ENCODE measurements at regions of chr13 and their contacts with region 1.

Region 1: DNA sequence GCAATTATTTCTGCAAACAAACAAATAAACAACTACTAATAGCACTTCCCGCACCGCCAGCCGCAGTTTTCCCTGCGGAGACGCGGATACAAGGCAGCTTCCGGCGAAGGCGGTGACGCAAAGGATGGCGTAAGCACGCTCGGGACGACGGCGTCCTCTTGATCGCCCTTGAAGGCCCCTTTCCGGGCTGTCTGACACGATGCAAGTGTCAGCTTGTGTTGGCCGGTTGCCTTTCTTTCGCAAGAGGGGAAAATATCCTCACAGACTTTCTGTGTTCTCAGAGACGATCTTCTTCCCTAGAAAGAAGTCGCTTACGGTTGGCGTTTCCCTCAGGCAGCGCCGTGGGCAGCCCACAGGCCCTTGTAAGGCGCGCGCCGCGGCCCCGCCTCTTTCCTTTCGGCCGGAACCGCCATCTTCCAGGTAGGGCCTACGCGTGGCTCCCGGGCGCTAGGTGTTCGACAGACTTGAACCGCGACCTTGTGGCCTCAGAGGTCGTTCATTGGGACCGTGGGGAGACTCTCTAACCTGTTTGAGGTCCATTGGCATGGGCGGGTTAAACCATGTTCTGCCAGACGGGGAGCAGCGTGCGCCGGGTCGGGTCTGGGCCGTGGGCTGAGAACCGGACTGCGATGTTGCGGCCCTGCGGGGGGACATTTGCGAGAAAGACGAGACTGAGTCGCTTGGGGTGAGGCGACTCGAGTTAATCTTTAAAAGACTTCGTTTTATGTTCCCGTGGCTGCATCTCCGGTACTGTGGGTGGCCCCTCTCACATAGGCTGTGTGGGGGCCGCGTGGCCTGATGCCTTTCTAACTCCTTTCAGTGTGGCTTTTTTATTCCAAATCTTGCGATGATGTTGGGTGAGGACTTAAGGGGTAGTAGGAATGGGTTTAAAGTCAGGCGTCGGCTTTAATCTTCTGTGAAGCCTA is at the start of gene RPL21:
- DNase-seq: peak; percentile 94
- H3K4me3 Mint-ChIP-seq: peak within 1 kb of the TSS; percentile 99
- H3K27ac Mint-ChIP-seq: peak within 1 kb of the TSS; percentile 99
- H3K4me1 Mint-ChIP-seq: peaks cover 43% of the 10 kb centered on the region
- H3K27me3 Mint-ChIP-seq: no peaks in the 10 kb centered on the region
- total RNA-seq, gene RPL21: 1,766 to 1,839 TPM

Region 2: GRCh38 chr13:26221721-26222519 is 1029.5 kb before region 1 on chr13 and contains the start of gene RNF6:
- CTCF ChIA-PET with region 1: no interaction called
- intact Hi-C with region 1: loop called (anchors 5 kb)
- DNase-seq: peak; percentile 92
- H3K4me3 Mint-ChIP-seq: peak within 1 kb of the TSS; percentile 91
- H3K27ac Mint-ChIP-seq: peak within 1 kb of the TSS; percentile 100
- H3K4me1 Mint-ChIP-seq: peaks cover 30% of the 10 kb centered on the region
- H3K27me3 Mint-ChIP-seq: peaks cover 2% of the 10 kb centered on the region
- total RNA-seq, gene RNF6: 38.2 to 39.4 TPM

Region 3: DNA sequence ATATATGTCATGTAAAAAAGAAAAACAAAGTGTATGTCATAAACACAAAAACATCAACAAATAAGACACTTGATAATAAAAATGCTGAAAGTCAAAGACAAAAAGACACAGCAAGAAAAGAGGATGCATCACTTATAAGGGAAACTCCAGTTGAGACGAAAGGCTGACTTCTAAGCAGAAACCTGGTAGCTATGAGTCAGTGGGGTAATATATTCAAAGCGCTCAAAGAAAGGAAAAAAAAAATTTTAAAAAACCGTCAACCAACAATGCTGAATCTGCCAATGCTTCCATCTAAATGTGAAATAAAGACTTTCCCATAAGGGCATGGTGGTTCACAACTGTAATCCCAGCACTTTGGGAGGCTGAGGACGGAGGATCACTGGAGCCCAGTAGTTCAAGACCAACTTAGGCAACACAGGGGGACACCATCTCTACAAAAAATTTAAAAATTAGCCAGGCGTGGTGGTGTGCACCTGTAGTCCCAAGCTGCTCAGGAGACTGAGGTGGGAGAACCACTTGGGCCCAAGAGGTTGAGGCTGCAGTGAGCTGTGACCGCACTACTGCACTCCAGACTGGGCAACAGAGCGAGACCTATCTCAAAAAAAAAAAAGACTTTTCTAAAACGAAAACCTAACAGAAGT is 103.8 kb before region 1 on chr13:
- CTCF ChIA-PET with region 1: no interaction called
- intact Hi-C with region 1: loop called (anchors 1 kb)
- DNase-seq: no peak
- H3K4me3 Mint-ChIP-seq: peak overlapping the region; percentile 56
- H3K27ac Mint-ChIP-seq: peak overlapping the region; percentile 93
- H3K4me1 Mint-ChIP-seq: peaks cover 81% of the 10 kb centered on the region
- H3K27me3 Mint-ChIP-seq: no peaks in the 10 kb centered on the region

Region 4: GRCh38 chr13:27226991-27227390 is 24.4 kb before region 1 on chr13:
- CTCF ChIA-PET with region 1: no interaction called
- intact Hi-C with region 1: no loop called
- DNase-seq: no peak
- H3K4me3 Mint-ChIP-seq: no peak overlapping the region
- H3K27ac Mint-ChIP-seq: no peak overlapping the region
- H3K4me1 Mint-ChIP-seq: peaks cover 6% of the 10 kb centered on the region
- H3K27me3 Mint-ChIP-seq: peaks cover 10% of the 10 kb centered on the region

Region 5: GRCh38 chr13:27270594-27271520 is 19.4 kb after region 1 on chr13 and contains the start of gene RASL11A:
- CTCF ChIA-PET with region 1: interaction called, 4 read pairs
- intact Hi-C with region 1: loop called (anchors 1 kb)
- DNase-seq: peak; percentile 65
- H3K4me3 Mint-ChIP-seq: peak within 1 kb of the TSS; percentile 83
- H3K27ac Mint-ChIP-seq: no peak within 1 kb of the TSS
- H3K4me1 Mint-ChIP-seq: peaks cover 8% of the 10 kb centered on the region
- H3K27me3 Mint-ChIP-seq: peaks cover 3% of the 10 kb centered on the region
- total RNA-seq, gene RASL11A: 1.5 to 1.6 TPM

Region 6: GRCh38 chr13:27293873-27294515 is 42.6 kb after region 1 on chr13:
- CTCF ChIA-PET with region 1: no interaction called
- intact Hi-C with region 1: no loop called
- DNase-seq: peak; percentile 16
- H3K4me3 Mint-ChIP-seq: no peak overlapping the region
- H3K27ac Mint-ChIP-seq: peak overlapping the region; percentile 26
- H3K4me1 Mint-ChIP-seq: peaks cover 32% of the 10 kb centered on the region
- H3K27me3 Mint-ChIP-seq: no peaks in the 10 kb centered on the region

Region 7: GRCh38 chr13:27353166-27353583 is 101.7 kb after region 1 on chr13:
- CTCF ChIA-PET with region 1: no interaction called
- intact Hi-C with region 1: loop called (anchors 1 kb)
- DNase-seq: peak; percentile 68
- H3K4me3 Mint-ChIP-seq: no peak overlapping the region
- H3K27ac Mint-ChIP-seq: no peak overlapping the region
- H3K4me1 Mint-ChIP-seq: peaks cover 12% of the 10 kb centered on the region
- H3K27me3 Mint-ChIP-seq: peaks cover 9% of the 10 kb centered on the region

Region 8: DNA sequence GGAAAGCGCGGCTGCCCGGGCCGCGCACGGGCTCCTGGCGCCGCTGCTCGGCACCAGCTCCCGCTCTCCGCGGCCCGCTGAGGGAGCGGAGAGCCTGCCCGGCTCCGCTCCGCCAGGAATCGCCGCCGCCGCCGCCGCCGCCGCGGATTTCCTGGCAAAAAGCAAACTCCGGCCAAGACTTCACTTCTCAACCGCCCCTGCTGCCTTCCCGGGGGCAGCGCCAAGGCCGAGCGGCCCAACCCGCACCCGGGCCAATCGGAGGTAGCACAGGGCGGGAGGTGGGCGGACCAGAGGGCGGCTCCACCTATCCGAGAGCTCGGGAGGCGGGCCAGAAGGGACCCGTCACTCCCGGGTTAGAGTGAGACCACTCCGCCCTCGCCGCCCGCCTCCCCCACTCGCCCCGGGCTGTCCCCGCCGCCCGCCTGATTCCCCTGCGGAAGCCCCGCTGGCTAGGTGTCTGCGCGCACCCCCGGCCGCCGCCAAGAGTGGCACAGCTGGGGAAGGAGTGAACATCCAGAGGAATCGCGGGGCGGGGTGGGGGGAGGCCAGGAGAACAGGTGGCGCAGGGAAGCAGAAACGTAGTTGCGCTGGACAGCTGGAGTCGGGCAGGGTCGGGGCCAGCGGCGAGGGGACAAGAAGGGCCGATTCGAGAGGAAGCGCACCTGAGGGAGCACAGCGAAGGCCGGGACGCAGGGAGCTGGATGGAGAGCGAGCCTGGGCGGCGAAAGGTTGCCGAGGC is 369.1 kb after region 1 on chr13 and contains the start of gene LNX2:
- CTCF ChIA-PET with region 1: no interaction called
- intact Hi-C with region 1: loop called (anchors 1 kb)
- DNase-seq: peak; percentile 97
- H3K4me3 Mint-ChIP-seq: peak within 1 kb of the TSS; percentile 87
- H3K27ac Mint-ChIP-seq: peak within 1 kb of the TSS; percentile 89
- H3K4me1 Mint-ChIP-seq: peaks cover 52% of the 10 kb centered on the region
- H3K27me3 Mint-ChIP-seq: no peaks in the 10 kb centered on the region
- total RNA-seq, gene LNX2: 5.8 to 6.4 TPM